Activated T-helper 1 cell treated with anti-CD3 and anti-CD28 coated beads, Interleukin-12 subunit alpha, Interleukin-12 subunit beta, Interleukin-2, Interleukin-4 antibody, amounts not matched to agents 30 ng/mL and 10 ng/mL and 1 ng/mL, durations not matched to agents 14 hours and 24 hours and 36 hours (primary cell): ENCODE measurements at regions of chr14 and their contacts with region 1.

Region 1: DNA sequence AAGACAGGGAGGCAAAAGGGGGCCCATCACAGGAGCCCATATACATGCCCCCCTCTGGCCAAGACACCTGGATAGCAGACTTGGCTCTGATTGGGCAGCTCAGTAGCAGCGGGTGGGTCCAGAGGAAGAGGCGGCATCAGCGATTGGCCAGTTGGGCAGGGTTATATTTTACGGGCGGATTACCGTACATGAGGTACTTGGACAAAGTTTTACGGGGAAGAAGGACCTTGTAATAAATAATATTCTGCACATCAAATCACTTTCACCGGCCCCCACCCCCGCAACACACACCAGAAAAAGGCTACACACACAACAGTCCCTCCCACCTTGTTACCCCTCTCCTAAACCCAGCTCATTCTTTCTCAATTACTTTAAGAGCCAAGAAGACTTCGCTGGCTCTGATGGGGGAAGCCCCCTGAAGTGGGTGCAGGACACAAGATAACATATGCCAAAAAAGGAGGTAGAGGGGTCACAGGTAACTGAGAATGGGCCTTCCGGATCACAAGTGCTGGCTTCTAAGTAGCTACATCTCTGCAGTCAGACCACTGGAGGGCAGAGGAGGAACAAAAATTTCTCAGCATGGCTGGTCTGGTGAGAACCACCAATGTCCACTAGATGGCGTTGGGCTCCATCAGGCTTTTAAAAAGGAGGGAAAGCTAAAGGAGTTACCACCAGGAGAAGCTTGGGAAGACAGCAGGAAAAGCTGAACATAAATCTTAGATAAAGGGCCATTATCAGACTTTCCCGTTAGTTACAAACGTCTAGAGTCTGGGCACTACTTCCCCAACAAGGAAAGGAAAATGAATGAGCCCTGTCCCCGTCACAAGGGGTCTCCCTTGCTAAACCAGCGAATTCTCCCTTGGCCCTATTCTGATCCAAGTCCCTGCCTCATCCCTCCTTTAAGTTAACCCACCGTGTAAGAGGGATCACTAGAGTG is 11.4 kb upstream of the CDH24 start:
- DNase-seq: peak; percentile 65
- H3K4me3 Mint-ChIP-seq: peak overlapping the region; percentile 74
- H3K27ac Mint-ChIP-seq: peak overlapping the region; percentile 53
- H3K4me1 Mint-ChIP-seq: peaks cover 42% of the 10 kb centered on the region
- H3K27me3 Mint-ChIP-seq: no peaks in the 10 kb centered on the region

Region 2: GRCh38 chr14:22929104-22929847 is 139.5 kb before region 1 on chr14 and contains the start of gene PRMT5:
- intact Hi-C with region 1: loop called (anchors 1 kb)
- DNase-seq: peak; percentile 95
- H3K4me3 Mint-ChIP-seq: no peak within 1 kb of the TSS
- H3K27ac Mint-ChIP-seq: no peak within 1 kb of the TSS
- H3K4me1 Mint-ChIP-seq: peaks cover 32% of the 10 kb centered on the region
- H3K27me3 Mint-ChIP-seq: no peaks in the 10 kb centered on the region
- total RNA-seq, gene PRMT5: 174 and 180 TPM in 2 replicates

Region 3: DNA sequence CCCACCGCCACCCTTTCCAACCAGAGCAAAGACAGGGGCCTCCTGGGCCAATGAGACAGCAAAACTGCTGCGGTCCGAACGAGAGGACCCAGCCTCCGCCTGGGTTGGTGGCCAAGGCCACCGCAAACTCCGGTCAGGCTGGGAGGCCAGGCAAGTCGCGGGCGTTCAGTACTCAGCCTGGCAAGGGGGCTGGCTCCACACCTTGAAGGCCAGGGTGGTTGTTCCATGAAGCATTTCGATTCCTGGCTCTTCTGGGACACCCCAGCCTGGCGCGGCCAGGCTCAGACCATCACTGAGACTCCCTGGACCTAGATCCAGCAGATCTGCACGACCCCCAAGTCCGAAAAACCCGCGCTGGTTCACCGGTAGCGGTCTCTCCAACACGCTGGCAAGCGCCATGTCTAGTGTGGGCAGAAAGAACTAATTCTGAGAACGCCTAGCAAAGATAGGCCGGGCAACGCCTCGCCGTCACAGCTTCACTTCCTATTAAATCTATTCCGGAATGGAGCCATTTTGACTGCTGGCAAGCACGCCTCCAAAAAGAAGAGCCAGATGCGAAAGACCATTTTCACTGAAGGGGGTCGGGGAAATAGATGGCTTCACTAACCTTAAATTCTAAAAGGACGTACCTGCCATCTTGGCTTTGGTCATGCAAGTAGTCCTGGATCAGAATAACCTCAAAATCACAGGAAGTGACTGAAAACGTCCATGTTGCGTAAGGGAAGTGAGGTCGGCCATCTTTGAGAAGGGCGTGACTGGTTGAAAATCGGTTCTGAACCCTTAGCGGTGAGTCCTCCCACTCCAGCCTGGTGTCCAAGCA is 34.1 kb before region 1 on chr14 and contains the start of gene PSMB5:
- intact Hi-C with region 1: loop called (anchors 1 kb)
- DNase-seq: peak; percentile 85
- H3K4me3 Mint-ChIP-seq: peak within 1 kb of the TSS; percentile 98
- H3K27ac Mint-ChIP-seq: peak within 1 kb of the TSS; percentile 98
- H3K4me1 Mint-ChIP-seq: peaks cover 28% of the 10 kb centered on the region
- H3K27me3 Mint-ChIP-seq: peaks cover 2% of the 10 kb centered on the region
- total RNA-seq, gene PSMB5: 144 and 148 TPM in 2 replicates

Region 4: DNA sequence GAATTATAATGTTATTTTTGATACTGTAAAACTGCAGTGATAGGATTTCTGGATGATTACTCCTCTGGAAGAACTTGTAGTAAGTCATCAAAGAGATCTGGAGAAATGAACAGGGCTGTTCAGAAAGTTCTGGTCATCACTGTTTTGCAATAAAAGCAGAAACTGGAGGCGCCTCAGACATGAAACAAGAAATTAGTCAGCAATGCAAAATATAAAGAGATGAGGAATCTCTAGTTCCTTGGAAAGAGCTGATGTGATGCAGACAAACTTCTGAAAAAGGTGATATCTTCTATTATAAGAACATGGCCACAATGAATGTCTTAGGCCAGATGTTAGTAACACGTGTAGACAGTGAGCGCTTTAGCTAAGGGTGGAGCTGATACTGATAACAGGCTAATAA is 16.7 kb after region 1 on chr14:
- intact Hi-C with region 1: loop called (anchors 1 kb)
- DNase-seq: no peak
- H3K4me3 Mint-ChIP-seq: no peak overlapping the region
- H3K27ac Mint-ChIP-seq: peak overlapping the region; percentile 76
- H3K4me1 Mint-ChIP-seq: peaks cover 27% of the 10 kb centered on the region
- H3K27me3 Mint-ChIP-seq: no peaks in the 10 kb centered on the region

Region 5: GRCh38 chr14:23186913-23187654 is 118.3 kb after region 1 on chr14:
- intact Hi-C with region 1: loop called (anchors 2 kb)
- DNase-seq: no peak
- H3K4me3 Mint-ChIP-seq: no peak overlapping the region
- H3K27ac Mint-ChIP-seq: no peak overlapping the region
- H3K4me1 Mint-ChIP-seq: no peaks in the 10 kb centered on the region
- H3K27me3 Mint-ChIP-seq: peaks cover 15% of the 10 kb centered on the region

Region 6: GRCh38 chr14:23275412-23275811 is 206.7 kb after region 1 on chr14:
- intact Hi-C with region 1: no loop called
- DNase-seq: no peak
- H3K4me3 Mint-ChIP-seq: no peak overlapping the region
- H3K27ac Mint-ChIP-seq: no peak overlapping the region
- H3K4me1 Mint-ChIP-seq: no peaks in the 10 kb centered on the region
- H3K27me3 Mint-ChIP-seq: no peaks in the 10 kb centered on the region